PC-9 (cell line): ENCODE measurements at regions of chr3 and their contacts with region 1.

Region 1: DNA sequence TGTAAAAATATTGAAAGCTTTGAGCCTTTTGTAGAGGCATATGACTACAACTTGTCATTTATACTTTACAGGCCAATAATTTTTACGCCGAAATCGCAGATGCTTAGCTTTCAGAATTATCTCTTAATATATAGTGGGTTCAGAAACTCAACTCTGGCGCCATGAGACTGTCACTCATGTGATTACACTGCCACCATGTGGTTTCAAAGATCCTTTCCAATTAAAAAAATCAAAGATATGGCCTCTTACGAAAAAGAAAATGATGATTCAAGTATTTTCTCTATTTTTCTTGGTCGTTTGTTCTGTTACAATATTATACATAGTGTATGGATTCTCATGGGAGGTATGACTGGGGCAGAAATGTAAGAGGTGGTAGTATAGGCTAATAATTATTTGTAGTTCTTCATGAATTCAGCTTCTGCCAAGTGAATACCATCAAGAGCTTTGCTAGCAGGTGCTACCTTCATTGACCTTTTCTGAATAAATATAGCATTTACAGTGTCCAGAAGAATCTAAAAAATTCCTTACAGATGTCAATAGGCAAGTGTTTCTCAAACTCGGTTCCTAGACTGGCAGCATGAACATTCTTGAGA is 751.7 kb upstream of the GOLIM4 start:
- DNase-seq: peak in 1 of 2 experiments; percentile 38
- H3K4me3 ChIP-seq: no peak overlapping the region; the same call in 1 of the 2 replicates
- H3K27ac ChIP-seq: no peak overlapping the region
- H3K4me1 ChIP-seq: no peaks in the 10 kb centered on the region
- H3K27me3 ChIP-seq: peaks cover 19% of the 10 kb centered on the region; the same call in 1 of the 2 replicates
- CTCF ChIP-seq: peak; percentile 89

Region 2: DNA sequence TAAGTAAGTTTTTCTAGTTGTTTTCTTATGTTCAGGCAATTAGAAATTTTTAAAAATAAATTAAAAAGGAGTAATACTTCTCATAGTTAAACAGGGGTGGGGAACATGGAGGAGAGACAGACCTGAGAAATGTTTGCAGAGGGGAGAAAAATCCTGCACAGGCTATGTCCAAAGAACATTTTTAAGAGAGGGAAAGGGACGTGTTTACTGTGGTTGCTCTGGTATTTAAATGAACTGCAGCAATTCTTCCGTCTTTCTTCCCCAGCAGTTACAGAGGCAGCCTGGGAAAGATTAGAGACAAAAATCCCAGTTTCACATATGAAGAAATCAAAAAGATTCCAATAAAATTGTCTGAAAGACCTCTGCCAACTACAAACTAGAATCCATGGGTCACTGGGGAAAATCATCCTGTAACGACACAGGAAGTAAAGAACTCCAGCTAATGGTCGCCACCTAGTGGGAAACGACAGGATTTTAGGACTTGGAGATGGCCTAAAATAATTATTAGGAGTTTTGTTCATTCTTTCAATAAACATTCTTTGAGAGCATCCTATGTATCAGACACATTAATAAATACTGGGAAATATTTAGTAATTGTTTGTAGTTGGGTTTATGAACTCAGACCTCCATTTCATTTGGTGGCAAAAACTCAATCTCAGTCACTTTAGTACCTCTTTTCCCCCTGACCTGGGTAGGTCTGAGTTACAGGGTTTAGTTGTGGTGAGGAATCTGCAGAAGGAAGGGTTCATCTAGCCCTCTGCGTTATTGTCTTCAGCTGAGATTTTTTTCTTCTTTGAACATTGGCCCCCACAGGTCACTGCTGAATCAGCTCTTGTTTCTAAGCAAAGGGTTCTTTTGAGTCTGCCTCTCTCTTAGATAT is 681.8 kb before region 1 on chr3:
- CTCF ChIA-PET with region 1: no interaction called
- POLR2A ChIA-PET with region 1: no interaction called
- intact Hi-C with region 1: loop called (anchors 5 kb)
- DNase-seq: peak; percentile 36 to 46
- H3K4me3 ChIP-seq: no peak overlapping the region
- H3K27ac ChIP-seq: no peak overlapping the region
- H3K4me1 ChIP-seq: no peaks in the 10 kb centered on the region
- H3K27me3 ChIP-seq: no peaks in the 10 kb centered on the region
- CTCF ChIP-seq: peak; percentile 87

Region 3: DNA sequence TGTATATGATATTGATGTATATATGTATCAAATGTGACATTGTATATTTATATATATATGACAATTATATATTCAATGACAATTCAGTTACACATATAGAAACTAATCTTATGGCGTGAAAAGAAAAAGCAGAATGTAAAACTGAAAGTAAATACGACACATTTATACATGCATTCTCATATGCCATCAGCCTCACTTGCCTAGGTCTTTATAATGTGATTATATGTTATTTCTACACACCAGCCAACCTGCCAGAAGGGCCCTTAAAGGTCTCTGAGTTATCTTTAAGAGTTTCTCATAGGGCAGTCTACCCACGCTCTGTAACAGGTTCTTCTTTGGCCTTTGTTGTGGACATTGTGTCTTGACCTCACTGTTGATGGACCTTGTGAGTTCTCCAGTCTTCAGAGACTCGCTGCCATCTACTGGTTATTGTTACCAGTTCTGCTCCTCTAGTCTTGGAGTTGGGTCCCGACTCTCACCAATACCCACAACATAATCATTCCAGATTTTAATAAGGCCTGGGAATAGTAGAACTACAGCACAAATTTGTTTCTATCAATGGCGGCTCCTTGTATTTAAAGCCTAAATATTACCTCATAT is 380.2 kb before region 1 on chr3:
- CTCF ChIA-PET with region 1: no interaction called
- POLR2A ChIA-PET with region 1: no interaction called
- intact Hi-C with region 1: loop called (anchors 1 kb)
- DNase-seq: peak in 1 of 2 experiments; percentile 34
- H3K4me3 ChIP-seq: no peak overlapping the region
- H3K27ac ChIP-seq: no peak overlapping the region
- H3K4me1 ChIP-seq: no peaks in the 10 kb centered on the region
- H3K27me3 ChIP-seq: no peaks in the 10 kb centered on the region
- CTCF ChIP-seq: peak; percentile 47

Region 4: GRCh38 chr3:168511428-168512014 is 335.9 kb before region 1 on chr3:
- CTCF ChIA-PET with region 1: interaction called, 4 read pairs
- POLR2A ChIA-PET with region 1: no interaction called
- intact Hi-C with region 1: loop called (anchors 1 kb)
- DNase-seq: no peak
- H3K4me3 ChIP-seq: no peak overlapping the region
- H3K27ac ChIP-seq: no peak overlapping the region
- H3K4me1 ChIP-seq: no peaks in the 10 kb centered on the region
- H3K27me3 ChIP-seq: no peaks in the 10 kb centered on the region
- CTCF ChIP-seq: peak; percentile 74

Region 5: DNA sequence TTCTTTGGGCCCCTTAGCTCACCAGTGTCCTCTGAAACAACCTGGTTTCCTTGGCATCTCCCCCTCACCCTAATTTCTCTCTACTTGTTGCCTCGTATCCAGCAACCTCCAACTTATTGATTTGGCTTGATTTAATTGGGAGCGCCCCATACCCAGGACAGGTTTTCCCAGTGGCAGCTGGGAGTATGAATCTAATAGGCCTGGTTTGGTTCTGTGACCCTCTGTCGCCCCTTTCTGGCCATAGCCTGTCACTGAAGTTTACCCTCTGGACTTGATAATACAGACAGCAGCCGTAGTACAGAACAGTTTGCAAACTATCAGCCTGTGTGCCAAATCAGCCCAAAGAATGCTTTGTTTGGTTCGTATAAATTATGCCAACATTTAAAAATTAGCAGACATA is 226.6 kb before region 1 on chr3:
- CTCF ChIA-PET with region 1: no interaction called
- POLR2A ChIA-PET with region 1: no interaction called
- intact Hi-C with region 1: loop called (anchors 1 kb)
- DNase-seq: peak in 1 of 2 experiments; percentile 18
- H3K4me3 ChIP-seq: no peak overlapping the region
- H3K27ac ChIP-seq: no peak overlapping the region
- H3K4me1 ChIP-seq: no peaks in the 10 kb centered on the region
- H3K27me3 ChIP-seq: no peaks in the 10 kb centered on the region
- CTCF ChIP-seq: peak; percentile 68

Region 6: GRCh38 chr3:168878655-168879054 is 31.3 kb after region 1 on chr3:
- CTCF ChIA-PET with region 1: no interaction called
- POLR2A ChIA-PET with region 1: no interaction called
- intact Hi-C with region 1: no loop called
- DNase-seq: peak in 1 of 2 experiments; percentile 65
- H3K4me3 ChIP-seq: no peak overlapping the region
- H3K27ac ChIP-seq: peak overlapping the region; percentile 61
- H3K4me1 ChIP-seq: peaks cover 34% of the 10 kb centered on the region
- H3K27me3 ChIP-seq: no peaks in the 10 kb centered on the region
- CTCF ChIP-seq: no peak